ENCODE measurements at regions of chr9 and their contacts with region 1.

Region 1: GRCh38 chr9:122809718-122810117 is 9.8 kb downstream of the OR1K1 start:
- DNase-seq: no peak
- ATAC-seq: peak; percentile 22

Region 2: GRCh38 chr9:122464633-122465567 is 344.8 kb before region 1 on chr9:
- intact Hi-C with region 1: loop called in 1 of 2 experiments (anchors 2 kb)
- DNase-seq: peak; percentile 73 to 74
- ATAC-seq: peak; percentile 91

Region 3: DNA sequence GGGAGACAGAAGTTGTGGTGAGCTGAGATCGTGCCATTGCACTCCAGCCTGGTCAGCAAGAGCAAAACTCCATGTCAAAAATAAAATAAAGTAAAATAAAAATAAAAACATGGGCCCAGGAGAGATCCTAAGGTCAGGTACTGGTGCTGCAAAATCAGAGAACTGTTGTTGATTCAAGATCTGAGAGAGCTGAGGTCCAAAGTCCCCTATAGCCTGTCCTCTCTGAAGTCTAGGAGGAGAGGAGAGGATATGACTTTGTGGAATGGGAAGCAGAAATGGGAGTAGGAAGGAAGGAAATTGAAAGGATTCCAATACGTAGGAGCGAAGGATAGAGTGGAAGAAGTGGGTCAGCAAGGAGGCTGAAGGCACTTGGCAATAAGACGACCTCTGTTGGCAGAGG is 90.5 kb before region 1 on chr9:
- intact Hi-C with region 1: no loop called
- DNase-seq: no peak
- ATAC-seq: no peak

Region 4: GRCh38 chr9:122860317-122861142 is 50.8 kb after region 1 on chr9:
- intact Hi-C with region 1: no loop called
- DNase-seq: no peak
- ATAC-seq: no peak

Region 5: DNA sequence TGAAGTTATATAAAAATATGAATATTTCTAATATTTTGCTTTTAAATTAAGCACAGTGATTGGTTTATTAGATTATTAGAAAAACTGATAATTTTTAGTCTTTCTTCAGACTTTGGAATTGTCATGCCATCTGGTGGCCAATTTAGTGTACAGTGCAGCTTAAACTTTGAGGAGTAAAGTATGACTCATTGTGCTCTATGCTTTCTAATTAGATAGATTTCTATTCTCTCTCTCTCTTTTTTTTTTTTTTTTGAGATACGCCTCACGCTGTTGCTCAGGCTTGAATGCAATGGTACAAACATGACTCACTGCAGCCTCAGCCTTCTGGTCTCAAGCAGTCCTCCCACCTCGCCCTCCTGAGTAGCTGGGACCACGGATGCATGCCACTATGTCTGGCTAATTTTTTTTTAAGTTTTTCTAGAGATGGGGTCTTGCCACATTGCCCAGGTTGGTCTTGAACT is 181.7 kb after region 1 on chr9:
- intact Hi-C with region 1: no loop called
- DNase-seq: peak in 1 of 2 donors; percentile 13
- ATAC-seq: peak; percentile 79